B cell (primary cell): ENCODE measurements at regions of chr17 and their contacts with region 1.

Region 1: DNA sequence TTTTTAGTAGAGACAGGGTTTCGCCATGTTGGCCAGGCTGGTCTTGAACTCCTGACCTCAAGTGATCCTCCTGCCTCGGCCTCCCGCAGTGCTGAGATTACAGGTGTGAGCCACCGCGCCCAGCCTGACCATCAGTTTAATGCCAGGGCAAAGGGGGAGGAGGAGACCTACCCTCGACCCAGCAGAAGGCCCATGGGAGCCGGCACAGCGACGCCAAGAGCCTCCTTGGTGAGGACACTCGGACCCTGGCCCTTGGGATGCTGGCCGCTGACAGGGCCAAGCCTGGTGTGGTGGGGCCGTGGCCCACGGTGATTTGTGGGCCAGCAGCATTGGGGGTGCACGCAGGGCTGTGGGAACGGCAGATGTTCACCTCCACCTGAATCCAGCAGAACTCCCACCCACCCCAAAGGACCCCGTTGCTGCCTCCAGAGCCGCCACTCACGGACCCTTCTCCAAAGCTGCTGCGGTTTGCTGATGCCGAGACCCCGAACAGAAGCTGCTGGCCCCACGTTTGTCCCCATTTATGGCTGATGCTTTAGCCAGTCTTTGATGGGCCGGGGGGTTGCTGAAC is 20.0 kb downstream of the UTS2R start:
- DNase-seq: no peak
- ATAC-seq: no peak
- H3K4me3 ChIP-seq: no peak overlapping the region
- H3K4me3 Mint-ChIP-seq: no peak overlapping the region
- H3K27ac ChIP-seq: no peak overlapping the region
- H3K27ac Mint-ChIP-seq: no peak overlapping the region
- H3K4me1 ChIP-seq: no peaks in the 10 kb centered on the region
- H3K4me1 Mint-ChIP-seq: peaks cover 2% of the 10 kb centered on the region
- H3K27me3 ChIP-seq: peaks cover 0 to 7% (median 0%) of the 10 kb centered on the region in 4 experiments
- H3K27me3 Mint-ChIP-seq: no peaks in the 10 kb centered on the region
- CTCF ChIP-seq: no peak

Region 2: GRCh38 chr17:82440991-82441627 is 49.5 kb after region 1 on chr17:
- CTCF ChIA-PET with region 1: no interaction called
- POLR2A ChIA-PET with region 1: interaction called, 10 read pairs
- intact Hi-C with region 1: no loop called
- DNase-seq: no peak
- ATAC-seq: no peak
- H3K4me3 ChIP-seq: peak overlapping the region in 1 of 5 experiments; percentile 3
- H3K4me3 Mint-ChIP-seq: peak overlapping the region; percentile 78
- H3K27ac ChIP-seq: peak overlapping the region; percentile 43 to 78
- H3K27ac Mint-ChIP-seq: peak overlapping the region; percentile 91
- H3K4me1 ChIP-seq: peaks cover 19 to 70% of the 10 kb centered on the region in 2 donors
- H3K4me1 Mint-ChIP-seq: peaks cover 39% of the 10 kb centered on the region
- H3K27me3 ChIP-seq: no peaks in the 10 kb centered on the region
- H3K27me3 Mint-ChIP-seq: no peaks in the 10 kb centered on the region
- CTCF ChIP-seq: no peak